Right lobe of liver (tissue), 6 donors: ENCODE measurements at regions of chr3 and their contacts with region 1.

Region 1: DNA sequence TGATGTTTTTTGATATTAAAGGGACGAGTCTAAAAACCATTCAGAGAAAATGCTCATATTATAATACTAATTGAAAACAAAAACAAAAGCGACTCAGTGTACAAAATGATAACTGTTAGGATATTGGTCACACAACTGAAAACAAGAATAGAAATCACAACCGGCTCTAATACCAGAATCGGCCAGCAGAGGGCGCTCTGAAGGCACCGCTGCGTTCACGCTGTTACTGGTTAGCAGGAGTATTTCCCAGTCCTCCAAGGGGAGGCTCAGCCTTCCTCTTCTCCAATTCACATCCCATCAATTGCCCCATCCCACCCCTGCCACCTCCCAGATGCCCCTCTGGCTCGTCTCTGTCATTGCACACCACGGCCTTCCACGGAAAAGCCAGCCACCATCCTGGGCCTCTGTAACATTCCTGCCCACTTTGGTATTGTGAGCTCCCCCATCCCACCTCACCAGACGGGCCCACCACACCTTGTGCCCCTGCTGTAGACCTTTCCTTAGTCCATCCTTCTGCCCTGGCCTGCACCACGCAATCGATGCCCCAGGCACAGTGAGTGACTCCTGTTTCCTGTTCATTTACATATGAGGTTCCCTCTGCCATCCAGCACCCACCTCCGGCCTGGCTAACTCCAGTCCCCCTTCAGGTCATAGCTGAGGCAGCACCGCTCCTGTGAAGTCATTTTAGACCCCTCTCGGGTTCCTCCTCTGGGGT is 8.5 kb downstream of the FAM107A start:
- DNase-seq: peak; percentile 69 to 77 (median 70)
- ATAC-seq: peak; percentile 78 to 91 (median 85)
- H3K4me3 ChIP-seq: no peak overlapping the region
- H3K27ac ChIP-seq: no peak overlapping the region
- H3K4me1 ChIP-seq: peaks cover 0 to 7% (median 0%) of the 10 kb centered on the region in 4 donors
- H3K27me3 ChIP-seq: no peaks in the 10 kb centered on the region
- CTCF ChIP-seq: peak; percentile 84 to 94 (median 94)
- POLR2A ChIP-seq: no peak

Region 2: GRCh38 chr3:58630076-58630709 is 61.5 kb after region 1 on chr3:
- intact Hi-C with region 1: loop called (anchors 5 kb)
- DNase-seq: peak in 2 of 3 donors; percentile 51 to 76
- ATAC-seq: peak; percentile 62 to 75 (median 70)
- H3K4me3 ChIP-seq: no peak overlapping the region
- H3K27ac ChIP-seq: no peak overlapping the region
- H3K4me1 ChIP-seq: peaks cover 0 to 32% (median 14%) of the 10 kb centered on the region in 4 donors
- H3K27me3 ChIP-seq: no peaks in the 10 kb centered on the region
- CTCF ChIP-seq: peak; percentile 87 to 96 (median 92)
- POLR2A ChIP-seq: no peak

Region 3: GRCh38 chr3:58868097-58868779 is 299.5 kb after region 1 on chr3:
- intact Hi-C with region 1: no loop called
- DNase-seq: no peak
- ATAC-seq: no peak
- H3K4me3 ChIP-seq: no peak overlapping the region
- H3K27ac ChIP-seq: no peak overlapping the region
- H3K4me1 ChIP-seq: no peaks in the 10 kb centered on the region
- H3K27me3 ChIP-seq: no peaks in the 10 kb centered on the region
- CTCF ChIP-seq: no peak
- POLR2A ChIP-seq: no peak